ENCODE measurements at regions of chr4 and their contacts with region 1.

Region 1: GRCh38 chr4:127965062-127965802 is at the starts of genes ABHD18 and MFSD8:
- DNase-seq: peak; percentile 99
- H3K4me3 ChIP-seq: peak within 1 kb of the TSS; percentile 96
- H3K27ac ChIP-seq: peak within 1 kb of the TSS; percentile 99
- H3K4me1 ChIP-seq: no peaks in the 10 kb centered on the region
- H3K27me3 ChIP-seq: no peaks in the 10 kb centered on the region
- CTCF ChIP-seq: no peak
- total RNA-seq, gene ABHD18: 18.6 to 20.8 TPM
- total RNA-seq, gene MFSD8: 19.9 to 22.0 TPM

Region 2: GRCh38 chr4:127575888-127576287 is 389.3 kb before region 1 on chr4:
- intact Hi-C with region 1: no loop called
- DNase-seq: no peak
- H3K4me3 ChIP-seq: no peak overlapping the region
- H3K27ac ChIP-seq: no peak overlapping the region
- H3K4me1 ChIP-seq: no peaks in the 10 kb centered on the region
- H3K27me3 ChIP-seq: no peaks in the 10 kb centered on the region
- CTCF ChIP-seq: no peak

Region 3: DNA sequence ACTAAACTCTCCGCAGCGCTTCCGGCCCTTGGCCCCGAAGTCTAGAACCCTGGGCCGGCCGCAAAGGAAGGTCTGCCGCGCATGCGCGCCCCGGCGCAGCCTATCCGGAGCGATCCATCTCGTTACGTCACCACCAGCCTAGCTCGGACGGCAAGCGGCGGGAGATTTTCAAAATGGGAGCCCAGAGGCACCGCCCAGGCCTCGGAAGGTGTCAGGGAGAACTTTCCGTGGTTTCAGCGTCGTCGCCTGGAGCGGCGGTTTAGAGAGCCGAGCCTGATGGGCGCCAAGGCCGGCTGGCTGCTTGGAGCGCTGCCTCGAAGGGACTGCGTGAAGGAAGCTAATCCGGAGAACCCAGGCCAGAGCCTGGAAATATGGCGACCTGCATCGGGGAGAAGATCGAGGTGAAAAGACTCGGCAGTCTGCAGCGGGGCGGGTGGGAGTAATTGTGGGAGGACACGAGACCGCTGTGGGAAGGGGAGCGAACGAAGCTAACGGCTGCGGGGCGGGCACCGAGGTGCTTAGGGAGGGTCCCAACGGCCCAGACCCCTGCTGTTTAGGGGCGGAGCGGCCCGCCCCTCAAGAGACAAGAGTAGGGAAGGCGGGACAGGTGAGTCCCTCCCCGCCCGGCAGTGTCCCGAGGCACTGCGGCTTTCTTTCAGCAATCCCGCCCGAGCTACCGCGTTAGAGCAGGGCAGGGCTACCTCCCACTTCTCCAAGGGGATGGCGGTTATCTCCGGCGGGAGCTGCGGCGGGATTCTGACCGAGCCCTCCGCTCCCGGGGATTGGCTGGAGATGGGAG is 84.3 kb before region 1 on chr4 and contains the start of gene PLK4:
- intact Hi-C with region 1: loop called (anchors 10 kb)
- DNase-seq: peak; percentile 97
- H3K4me3 ChIP-seq: peak within 1 kb of the TSS; percentile 94
- H3K27ac ChIP-seq: peak within 1 kb of the TSS; percentile 81
- H3K4me1 ChIP-seq: no peaks in the 10 kb centered on the region
- H3K27me3 ChIP-seq: no peaks in the 10 kb centered on the region
- CTCF ChIP-seq: no peak
- total RNA-seq, gene PLK4: 8.8 to 22.6 TPM

Region 4: GRCh38 chr4:128006592-128006991 is 41.4 kb after region 1 on chr4:
- intact Hi-C with region 1: no loop called
- DNase-seq: no peak
- H3K4me3 ChIP-seq: no peak overlapping the region
- H3K27ac ChIP-seq: no peak overlapping the region
- H3K4me1 ChIP-seq: no peaks in the 10 kb centered on the region
- H3K27me3 ChIP-seq: no peaks in the 10 kb centered on the region
- CTCF ChIP-seq: no peak

Region 5: DNA sequence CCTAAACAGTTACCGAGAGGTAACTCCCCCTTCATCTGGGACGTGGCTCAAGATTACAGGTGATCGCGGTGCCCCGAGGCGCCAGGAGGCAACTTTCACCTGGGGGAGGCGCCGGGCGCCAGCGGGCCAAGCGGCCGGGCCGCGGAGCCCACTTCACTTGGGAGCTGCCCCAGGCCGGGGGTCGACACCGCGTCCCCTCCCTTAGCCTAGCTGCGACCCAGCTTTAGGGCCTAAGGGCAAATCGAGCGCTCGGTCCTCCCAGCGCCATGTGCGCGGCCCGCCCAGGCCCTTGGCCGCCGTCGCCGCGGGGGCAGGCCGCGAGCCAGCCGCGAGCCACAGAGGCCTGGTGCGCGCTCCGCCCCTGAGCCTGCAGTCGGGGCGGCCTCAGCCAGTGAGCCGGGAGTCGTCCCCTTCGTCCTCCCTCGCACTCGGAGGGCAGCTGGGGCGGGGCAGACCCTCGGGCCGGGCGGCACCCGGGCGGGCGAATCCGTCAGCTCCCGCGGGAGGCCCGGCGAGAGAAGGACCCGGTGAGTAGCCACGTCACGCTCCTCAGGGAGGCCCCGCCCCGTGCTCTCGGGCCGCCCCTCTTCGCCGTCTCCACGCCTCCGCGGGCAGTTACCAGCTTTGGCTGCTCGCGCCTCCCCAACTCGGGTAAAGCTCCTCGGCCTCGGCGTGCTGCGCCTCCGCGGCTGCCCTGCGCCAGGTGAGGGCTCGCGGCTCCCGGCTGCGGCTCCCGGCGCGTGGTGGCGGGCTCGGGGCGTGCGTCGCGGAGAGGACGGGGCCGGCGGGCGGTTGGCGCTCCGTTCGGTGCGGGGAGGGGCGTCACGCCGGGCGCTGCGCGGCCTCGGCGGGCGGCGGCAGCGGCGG is 95.7 kb after region 1 on chr4 and contains the start of gene LARP1B:
- intact Hi-C with region 1: loop called (anchors 5 kb)
- DNase-seq: peak; percentile 97
- H3K4me3 ChIP-seq: peak within 1 kb of the TSS; percentile 87
- H3K27ac ChIP-seq: peak within 1 kb of the TSS; percentile 97
- H3K4me1 ChIP-seq: peaks cover 6% of the 10 kb centered on the region
- H3K27me3 ChIP-seq: no peaks in the 10 kb centered on the region
- CTCF ChIP-seq: no peak
- total RNA-seq, gene LARP1B: 28.8 to 29.5 TPM

Region 6: GRCh38 chr4:129014566-129015509 is 1049.6 kb after region 1 on chr4:
- intact Hi-C with region 1: no loop called
- DNase-seq: no peak
- H3K4me3 ChIP-seq: no peak overlapping the region
- H3K27ac ChIP-seq: no peak overlapping the region
- H3K4me1 ChIP-seq: no peaks in the 10 kb centered on the region
- H3K27me3 ChIP-seq: no peaks in the 10 kb centered on the region
- CTCF ChIP-seq: no peak

Measured in colonic mucosa (tissue), 4 donors.